Tibial artery (tissue), 4 donors: ENCODE measurements at regions of chr7 and their contacts with region 1.

Region 1: DNA sequence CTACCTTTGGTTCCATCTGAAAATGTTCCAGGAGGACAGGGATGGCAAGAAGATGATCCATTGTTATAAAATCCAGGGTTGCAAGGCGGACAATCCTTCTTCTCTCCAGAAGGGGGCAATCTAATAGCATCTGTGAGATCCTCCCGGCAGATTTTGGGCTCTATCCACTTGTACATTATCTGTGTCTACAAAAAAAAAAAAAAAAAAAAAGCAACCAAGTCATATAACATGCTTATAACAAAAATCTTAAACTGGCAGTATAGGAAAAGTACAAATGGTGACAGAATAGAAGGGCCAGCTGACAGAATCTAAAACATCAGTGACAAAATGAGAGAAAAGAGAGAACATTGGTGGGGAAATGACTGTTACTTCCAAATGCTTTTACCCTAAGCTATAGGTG is 132.7 kb downstream of the ELAPOR2 start:
- DNase-seq: no peak
- H3K4me3 ChIP-seq: no peak overlapping the region
- H3K27ac ChIP-seq: no peak overlapping the region
- H3K4me1 ChIP-seq: peaks cover 0 to 4% (median 0%) of the 10 kb centered on the region in 4 donors
- H3K27me3 ChIP-seq: no peaks in the 10 kb centered on the region
- CTCF ChIP-seq: peak; percentile 55 to 56

Region 2: GRCh38 chr7:87152107-87152844 is 225.5 kb after region 1 on chr7 and contains the start of gene DMTF1:
- intact Hi-C with region 1: loop called (anchors 5 kb)
- DNase-seq: peak; percentile 95 to 98
- H3K4me3 ChIP-seq: peak within 1 kb of the TSS; percentile 85
- H3K27ac ChIP-seq: peak within 1 kb of the TSS; percentile 99
- H3K4me1 ChIP-seq: peaks cover 0 to 47% (median 25%) of the 10 kb centered on the region in 4 donors
- H3K27me3 ChIP-seq: no peaks in the 10 kb centered on the region
- CTCF ChIP-seq: peak in 1 of 2 experiments; percentile 3

Region 3: GRCh38 chr7:87231256-87231655 is 304.5 kb after region 1 on chr7:
- intact Hi-C with region 1: loop called (anchors 5 kb)
- DNase-seq: no peak
- H3K4me3 ChIP-seq: no peak overlapping the region
- H3K27ac ChIP-seq: no peak overlapping the region
- H3K4me1 ChIP-seq: peaks cover 0 to 16% (median 6%) of the 10 kb centered on the region in 4 donors
- H3K27me3 ChIP-seq: peaks cover 0 to 8% of the 10 kb centered on the region in 2 donors
- CTCF ChIP-seq: no peak